Activated CD4-positive, alpha-beta T cell treated with anti-CD3 and anti-CD28 coated beads, Interleukin-2, amount 10 ng/mL, durations not matched to agents 24 days and 14 days (primary cell): ENCODE measurements at regions of chr10 and their contacts with region 1.

Region 1: DNA sequence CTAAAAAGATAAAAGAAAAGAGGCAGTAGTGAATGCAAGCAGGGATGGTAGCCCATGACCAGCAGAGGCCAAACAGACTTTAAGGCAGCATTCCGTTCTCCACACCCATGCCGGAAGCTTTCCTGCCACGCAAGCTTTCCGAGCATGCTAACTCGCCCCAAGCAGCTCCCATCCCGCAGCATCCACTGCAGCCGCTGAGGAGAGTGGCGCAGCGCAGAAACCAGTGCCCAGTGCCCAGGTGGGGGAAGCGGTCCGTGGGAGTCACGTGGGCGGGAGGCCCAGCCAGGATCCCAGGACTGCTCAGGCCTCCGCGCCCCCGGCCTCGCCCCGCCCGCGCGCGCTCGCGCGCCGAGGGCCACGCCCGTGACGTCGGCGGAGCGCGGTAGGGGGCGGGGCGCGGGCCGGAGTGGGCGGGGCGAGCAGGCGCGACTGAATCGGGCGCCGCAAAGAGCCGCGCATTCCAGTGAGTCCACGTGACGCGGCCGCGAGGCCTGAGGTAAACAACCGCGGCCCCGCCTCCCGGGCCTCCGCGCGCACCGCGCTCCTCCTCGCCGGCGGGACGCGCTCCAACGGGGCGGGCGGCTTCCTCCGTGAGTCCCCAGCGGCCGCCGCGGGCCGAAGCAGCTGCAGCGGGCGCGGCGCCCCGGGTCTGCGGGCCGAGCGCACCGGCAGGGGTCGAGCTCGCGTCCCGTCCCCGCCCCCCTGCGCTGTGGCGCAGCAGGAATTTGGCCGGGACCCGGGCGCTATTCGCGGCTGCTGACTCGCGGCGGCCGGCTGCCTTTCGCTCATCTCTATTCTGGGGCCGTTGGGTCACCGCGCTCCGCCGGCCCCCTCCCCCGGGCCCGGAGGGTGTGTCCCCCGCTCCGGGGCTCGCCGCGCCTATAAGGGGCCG is at the start of gene OTUD1:
- DNase-seq: peak; percentile 99
- H3K4me3 Mint-ChIP-seq: peak within 1 kb of the TSS; percentile 96
- H3K27ac Mint-ChIP-seq: peak within 1 kb of the TSS; percentile 86
- H3K4me1 Mint-ChIP-seq: peaks cover 39% of the 10 kb centered on the region
- H3K27me3 Mint-ChIP-seq: no peaks in the 10 kb centered on the region
- total RNA-seq, gene OTUD1: 12.6 and 12.8 TPM in 2 replicates

Region 2: DNA sequence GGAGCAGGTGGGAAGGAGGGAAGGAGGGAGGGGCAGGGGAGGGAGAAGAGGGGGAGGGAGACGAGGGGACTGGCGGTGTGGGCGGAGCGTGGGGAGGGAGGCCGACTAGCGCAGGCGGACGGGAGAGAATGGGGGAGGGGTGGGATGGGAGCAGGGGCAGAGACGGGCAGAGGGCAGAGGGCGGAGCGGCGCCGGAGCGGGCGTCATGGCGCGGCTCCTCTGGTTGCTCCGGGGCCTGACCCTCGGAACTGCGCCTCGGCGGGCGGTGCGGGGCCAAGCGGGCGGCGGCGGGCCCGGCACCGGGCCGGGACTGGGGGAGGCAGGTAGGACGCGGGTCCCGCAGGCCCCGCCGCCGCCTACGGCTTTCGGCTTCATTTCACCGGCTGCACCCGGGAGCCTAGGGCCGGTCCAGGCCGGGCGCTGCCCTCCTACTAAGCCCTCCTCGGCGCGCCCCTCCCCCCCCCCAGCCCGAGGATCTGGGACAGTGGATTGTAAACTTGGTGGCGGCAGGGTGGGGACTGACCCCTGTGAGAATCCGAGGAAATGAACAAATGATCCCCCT is 343.3 kb before region 1 on chr10 and contains the start of gene MSRB2:
- intact Hi-C with region 1: loop called (anchors 5 kb)
- DNase-seq: peak; percentile 90
- H3K4me3 Mint-ChIP-seq: peak within 1 kb of the TSS; percentile 89
- H3K27ac Mint-ChIP-seq: peak within 1 kb of the TSS; percentile 93
- H3K4me1 Mint-ChIP-seq: peaks cover 40% of the 10 kb centered on the region
- H3K27me3 Mint-ChIP-seq: peaks cover 18% of the 10 kb centered on the region
- total RNA-seq, gene MSRB2: 3.3 and 3.9 TPM in 2 replicates

Region 3: GRCh38 chr10:23331567-23332290 is 107.1 kb before region 1 on chr10:
- intact Hi-C with region 1: loop called (anchors 2 kb)
- DNase-seq: peak; percentile 43
- H3K4me3 Mint-ChIP-seq: no peak overlapping the region
- H3K27ac Mint-ChIP-seq: peak overlapping the region; percentile 10
- H3K4me1 Mint-ChIP-seq: peaks cover 18% of the 10 kb centered on the region
- H3K27me3 Mint-ChIP-seq: no peaks in the 10 kb centered on the region

Region 4: DNA sequence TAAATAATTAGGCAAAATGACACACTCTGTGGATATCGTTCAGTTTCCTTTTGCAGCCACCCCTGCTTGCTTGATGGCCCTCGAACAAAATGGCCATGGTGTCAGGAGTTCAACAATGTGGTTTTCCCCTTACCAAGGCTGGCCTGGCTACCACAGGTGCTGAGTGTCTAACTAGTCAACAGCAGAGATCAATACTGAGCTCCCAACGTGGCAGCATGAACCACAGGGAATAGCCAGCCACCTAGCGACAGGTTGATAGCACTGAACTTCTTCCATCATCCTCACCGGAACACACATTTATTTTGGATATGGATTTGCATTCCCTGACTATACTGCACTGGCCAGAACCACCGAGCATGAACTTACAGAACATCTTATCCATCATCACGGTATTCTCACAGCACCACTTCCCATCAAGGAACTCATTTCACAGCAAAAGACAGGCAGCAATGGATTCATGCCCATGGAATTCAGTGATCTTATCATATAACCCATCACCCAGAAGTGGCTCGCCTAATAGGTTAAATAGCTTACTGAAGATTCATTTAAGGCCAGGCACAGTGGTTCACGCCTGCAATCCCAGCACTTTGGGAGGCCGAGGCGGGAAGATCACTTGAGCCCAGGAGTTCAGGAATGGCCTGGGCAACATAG is 100.5 kb before region 1 on chr10:
- intact Hi-C with region 1: loop called (anchors 2 kb)
- DNase-seq: no peak
- H3K4me3 Mint-ChIP-seq: no peak overlapping the region
- H3K27ac Mint-ChIP-seq: no peak overlapping the region
- H3K4me1 Mint-ChIP-seq: peaks cover 51% of the 10 kb centered on the region
- H3K27me3 Mint-ChIP-seq: no peaks in the 10 kb centered on the region

Region 5: GRCh38 chr10:23448802-23449570 is 10.2 kb after region 1 on chr10:
- intact Hi-C with region 1: loop called (anchors 1 kb)
- DNase-seq: no peak
- H3K4me3 Mint-ChIP-seq: peak overlapping the region; percentile 55
- H3K27ac Mint-ChIP-seq: peak overlapping the region; percentile 91
- H3K4me1 Mint-ChIP-seq: peaks cover 28% of the 10 kb centered on the region
- H3K27me3 Mint-ChIP-seq: no peaks in the 10 kb centered on the region

Region 6: GRCh38 chr10:23516530-23516929 is 77.7 kb after region 1 on chr10:
- intact Hi-C with region 1: loop called (anchors 5 kb)
- DNase-seq: peak; percentile 55
- H3K4me3 Mint-ChIP-seq: no peak overlapping the region
- H3K27ac Mint-ChIP-seq: no peak overlapping the region
- H3K4me1 Mint-ChIP-seq: peaks cover 14% of the 10 kb centered on the region
- H3K27me3 Mint-ChIP-seq: peaks cover 10% of the 10 kb centered on the region